Caco-2 (cell line): ENCODE measurements at regions of chr5 and their contacts with region 1.

Region 1: GRCh38 chr5:163408311-163408923 is 29.0 kb upstream of the CCNG1 start:
- DNase-seq: peak; percentile 37 to 65
- H3K4me3 ChIP-seq: no peak overlapping the region
- H3K4me3 Mint-ChIP-seq: no peak overlapping the region
- H3K27ac Mint-ChIP-seq: no peak overlapping the region
- H3K4me1 ChIP-seq: no peaks in the 10 kb centered on the region
- H3K4me1 Mint-ChIP-seq: no peaks in the 10 kb centered on the region
- H3K27me3 ChIP-seq: no peaks in the 10 kb centered on the region
- H3K27me3 Mint-ChIP-seq: no peaks in the 10 kb centered on the region
- CTCF ChIP-seq: peak; percentile 85 to 89

Region 2: GRCh38 chr5:161966564-161966963 is 1441.9 kb before region 1 on chr5:
- CTCF ChIA-PET with region 1: interaction called, 5 read pairs
- POLR2A ChIA-PET with region 1: no interaction called
- intact Hi-C with region 1: loop called (anchors 5 kb)
- DNase-seq: peak in 1 of 2 experiments; percentile 11
- H3K4me3 ChIP-seq: no peak overlapping the region
- H3K4me3 Mint-ChIP-seq: no peak overlapping the region
- H3K27ac Mint-ChIP-seq: no peak overlapping the region
- H3K4me1 ChIP-seq: no peaks in the 10 kb centered on the region
- H3K4me1 Mint-ChIP-seq: no peaks in the 10 kb centered on the region
- H3K27me3 ChIP-seq: no peaks in the 10 kb centered on the region
- H3K27me3 Mint-ChIP-seq: no peaks in the 10 kb centered on the region
- CTCF ChIP-seq: peak; percentile 21 to 59

Region 3: DNA sequence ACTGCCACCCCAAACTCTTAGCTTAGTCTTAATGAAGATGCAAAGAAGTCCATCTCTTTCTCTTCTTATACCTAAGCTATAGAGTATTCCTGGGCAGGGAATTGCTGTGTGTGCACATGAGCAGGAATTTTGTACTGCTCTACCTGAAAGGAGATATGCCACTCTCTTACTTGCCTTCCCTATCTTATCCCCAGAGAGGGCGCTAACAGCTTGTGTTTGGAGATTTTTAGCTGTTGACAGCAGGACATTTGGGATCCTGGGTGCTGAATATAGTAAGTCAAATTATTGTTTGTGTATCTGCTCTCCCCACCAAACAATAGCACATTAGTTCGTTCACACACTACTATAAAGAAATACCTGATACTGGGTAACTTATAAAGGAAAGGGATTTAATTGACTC is 1181.3 kb before region 1 on chr5:
- CTCF ChIA-PET with region 1: interaction called, 11 read pairs
- POLR2A ChIA-PET with region 1: no interaction called
- intact Hi-C with region 1: no loop called
- DNase-seq: no peak
- H3K4me3 ChIP-seq: no peak overlapping the region
- H3K4me3 Mint-ChIP-seq: no peak overlapping the region
- H3K27ac Mint-ChIP-seq: no peak overlapping the region
- H3K4me1 ChIP-seq: no peaks in the 10 kb centered on the region
- H3K4me1 Mint-ChIP-seq: no peaks in the 10 kb centered on the region
- H3K27me3 ChIP-seq: no peaks in the 10 kb centered on the region
- H3K27me3 Mint-ChIP-seq: no peaks in the 10 kb centered on the region
- CTCF ChIP-seq: peak in 1 of 2 experiments; percentile 1

Region 4: DNA sequence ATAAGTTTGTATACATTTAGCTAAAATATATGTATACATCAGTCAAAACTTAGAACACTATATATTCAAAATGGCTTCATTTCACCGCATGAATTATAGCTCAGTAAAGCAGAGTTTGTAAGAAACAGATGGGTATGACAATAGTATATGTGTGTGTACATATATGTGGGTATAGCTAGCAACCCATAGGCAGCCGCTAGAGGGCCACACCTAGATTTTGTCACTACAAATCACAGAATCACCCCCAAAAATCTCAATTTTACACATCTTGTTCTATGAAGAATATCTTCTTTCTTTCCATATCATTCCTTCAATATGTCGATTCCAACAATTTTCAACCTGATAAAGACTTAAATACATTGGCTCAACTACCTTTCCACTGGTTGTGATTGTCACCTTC is 328.8 kb before region 1 on chr5:
- CTCF ChIA-PET with region 1: interaction called, 6 read pairs
- POLR2A ChIA-PET with region 1: no interaction called
- intact Hi-C with region 1: loop called (anchors 1 kb)
- DNase-seq: peak in 1 of 2 experiments; percentile 24
- H3K4me3 ChIP-seq: no peak overlapping the region
- H3K4me3 Mint-ChIP-seq: no peak overlapping the region
- H3K27ac Mint-ChIP-seq: no peak overlapping the region
- H3K4me1 ChIP-seq: no peaks in the 10 kb centered on the region
- H3K4me1 Mint-ChIP-seq: no peaks in the 10 kb centered on the region
- H3K27me3 ChIP-seq: no peaks in the 10 kb centered on the region
- H3K27me3 Mint-ChIP-seq: no peaks in the 10 kb centered on the region
- CTCF ChIP-seq: peak; percentile 45 to 51

Region 5: GRCh38 chr5:163306421-163306820 is 102.0 kb before region 1 on chr5:
- CTCF ChIA-PET with region 1: interaction called, 15 read pairs
- POLR2A ChIA-PET with region 1: no interaction called
- intact Hi-C with region 1: loop called (anchors 1 kb)
- DNase-seq: peak in 1 of 2 experiments; percentile 17
- H3K4me3 ChIP-seq: no peak overlapping the region
- H3K4me3 Mint-ChIP-seq: no peak overlapping the region
- H3K27ac Mint-ChIP-seq: no peak overlapping the region
- H3K4me1 ChIP-seq: no peaks in the 10 kb centered on the region
- H3K4me1 Mint-ChIP-seq: no peaks in the 10 kb centered on the region
- H3K27me3 ChIP-seq: no peaks in the 10 kb centered on the region
- H3K27me3 Mint-ChIP-seq: peaks cover 6% of the 10 kb centered on the region
- CTCF ChIP-seq: peak; percentile 21 to 46

Region 6: GRCh38 chr5:163362840-163363788 is 45.3 kb before region 1 on chr5:
- CTCF ChIA-PET with region 1: no interaction called
- POLR2A ChIA-PET with region 1: no interaction called
- intact Hi-C with region 1: no loop called
- DNase-seq: no peak
- H3K4me3 ChIP-seq: no peak overlapping the region
- H3K4me3 Mint-ChIP-seq: no peak overlapping the region
- H3K27ac Mint-ChIP-seq: no peak overlapping the region
- H3K4me1 ChIP-seq: peaks cover 11% of the 10 kb centered on the region
- H3K4me1 Mint-ChIP-seq: no peaks in the 10 kb centered on the region
- H3K27me3 ChIP-seq: no peaks in the 10 kb centered on the region
- H3K27me3 Mint-ChIP-seq: no peaks in the 10 kb centered on the region
- CTCF ChIP-seq: no peak